ENCODE measurements at regions of chr3 and their contacts with region 1.

Region 1: DNA sequence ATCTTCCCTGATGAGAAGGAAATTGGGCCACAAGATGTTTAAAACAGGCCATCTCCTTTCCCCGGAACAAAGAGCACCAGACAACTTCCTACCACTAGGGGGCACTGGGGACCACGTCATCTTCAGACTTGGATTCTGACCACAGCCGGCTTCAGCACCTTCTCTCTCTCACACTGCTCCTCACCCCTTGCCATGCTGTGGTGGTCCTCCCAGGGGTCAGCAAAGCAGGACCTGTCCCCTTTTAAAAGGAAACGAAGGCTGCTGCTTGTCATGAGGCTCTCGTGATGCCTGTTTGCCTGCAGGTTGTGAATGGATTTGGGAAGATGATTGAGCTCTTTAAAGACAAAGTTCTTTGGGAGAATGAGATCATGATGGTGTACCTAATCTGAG is 16.2 kb downstream of the RFT1 start:
- DNase-seq: peak; percentile 45 to 69
- H3K4me3 ChIP-seq: no peak overlapping the region
- H3K27ac ChIP-seq: peak overlapping the region; percentile 42
- H3K4me1 ChIP-seq: peaks cover 27% of the 10 kb centered on the region
- H3K27me3 ChIP-seq: no peaks in the 10 kb centered on the region
- CTCF ChIP-seq: peak; percentile 89

Region 2: GRCh38 chr3:53180305-53181023 is 66.5 kb after region 1 on chr3:
- CTCF ChIA-PET with region 1: interaction called, 20 read pairs
- POLR2A ChIA-PET with region 1: no interaction called
- intact Hi-C with region 1: no loop called
- DNase-seq: no peak
- H3K4me3 ChIP-seq: no peak overlapping the region
- H3K27ac ChIP-seq: no peak overlapping the region
- H3K4me1 ChIP-seq: no peaks in the 10 kb centered on the region
- H3K27me3 ChIP-seq: no peaks in the 10 kb centered on the region
- CTCF ChIP-seq: no peak

Region 3: GRCh38 chr3:53195602-53196574 is 81.9 kb after region 1 on chr3:
- CTCF ChIA-PET with region 1: interaction called, 6 read pairs
- POLR2A ChIA-PET with region 1: interaction called, 3 read pairs
- intact Hi-C with region 1: loop called (anchors 1 kb)
- DNase-seq: peak in 1 of 2 experiments; percentile 51
- H3K4me3 ChIP-seq: no peak overlapping the region
- H3K27ac ChIP-seq: no peak overlapping the region
- H3K4me1 ChIP-seq: peaks cover 8% of the 10 kb centered on the region
- H3K27me3 ChIP-seq: no peaks in the 10 kb centered on the region
- CTCF ChIP-seq: peak; percentile 93